ENCODE measurements at regions of chr9 and their contacts with region 1.

Region 1: DNA sequence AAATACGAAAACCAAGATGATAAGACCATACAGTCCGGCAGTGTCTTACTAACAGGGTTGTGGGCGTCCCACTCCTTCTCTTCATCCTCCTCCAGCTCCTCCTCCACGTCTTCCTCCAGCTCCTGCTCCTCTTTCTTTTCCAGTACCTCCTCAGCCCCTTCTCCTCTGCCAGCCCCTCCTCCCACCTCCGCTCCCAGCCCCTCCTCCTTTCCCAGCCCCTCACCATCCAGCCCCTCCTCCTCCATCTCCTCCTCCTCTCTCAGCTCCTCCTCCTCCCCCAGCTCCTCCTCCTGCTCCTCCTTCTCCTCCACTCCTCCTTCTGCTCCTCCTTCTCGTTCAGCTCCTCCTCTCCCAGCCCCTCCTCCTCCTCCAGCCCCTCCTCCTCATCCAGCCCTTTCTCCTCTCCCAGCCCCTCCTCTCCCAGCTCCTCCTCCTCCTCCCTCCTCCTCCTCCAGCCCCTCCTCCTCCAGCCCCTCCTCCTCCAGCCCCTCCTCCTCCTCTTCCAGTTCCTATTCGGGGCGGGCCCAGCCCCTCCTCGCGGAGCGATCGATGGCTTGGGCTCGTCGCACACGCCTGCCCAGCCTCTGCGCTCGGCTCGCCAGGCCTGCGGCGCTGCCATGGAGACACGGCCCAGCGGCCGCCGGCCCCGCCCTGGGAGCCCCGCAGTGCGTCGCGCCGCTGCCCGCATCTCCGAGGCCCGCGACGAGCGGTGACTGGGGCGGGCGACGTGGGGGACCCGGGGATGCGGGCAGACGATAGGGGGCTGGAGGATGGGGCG is at the start of gene BRD3OS:
- DNase-seq: peak; percentile 98 to 99
- ATAC-seq: peak; percentile 96 to 98 (median 96)
- H3K4me3 ChIP-seq: peak within 1 kb of the TSS; percentile 87
- H3K27ac ChIP-seq: peak within 1 kb of the TSS; percentile 51
- H3K4me1 ChIP-seq: peaks cover 8% of the 10 kb centered on the region
- H3K27me3 ChIP-seq: no peaks in the 10 kb centered on the region
- CTCF ChIP-seq: no peak
- total RNA-seq, gene BRD3OS: 2.4 to 4.3 (median 4.2) TPM

Region 2: GRCh38 chr9:134044944-134045343 is 19.9 kb after region 1 on chr9:
- intact Hi-C with region 1: loop called in 1 of 2 experiments (anchors 2 kb)
- DNase-seq: no peak
- ATAC-seq: no peak
- H3K4me3 ChIP-seq: no peak overlapping the region
- H3K27ac ChIP-seq: no peak overlapping the region
- H3K4me1 ChIP-seq: peaks cover 39% of the 10 kb centered on the region
- H3K27me3 ChIP-seq: no peaks in the 10 kb centered on the region
- CTCF ChIP-seq: no peak

Region 3: DNA sequence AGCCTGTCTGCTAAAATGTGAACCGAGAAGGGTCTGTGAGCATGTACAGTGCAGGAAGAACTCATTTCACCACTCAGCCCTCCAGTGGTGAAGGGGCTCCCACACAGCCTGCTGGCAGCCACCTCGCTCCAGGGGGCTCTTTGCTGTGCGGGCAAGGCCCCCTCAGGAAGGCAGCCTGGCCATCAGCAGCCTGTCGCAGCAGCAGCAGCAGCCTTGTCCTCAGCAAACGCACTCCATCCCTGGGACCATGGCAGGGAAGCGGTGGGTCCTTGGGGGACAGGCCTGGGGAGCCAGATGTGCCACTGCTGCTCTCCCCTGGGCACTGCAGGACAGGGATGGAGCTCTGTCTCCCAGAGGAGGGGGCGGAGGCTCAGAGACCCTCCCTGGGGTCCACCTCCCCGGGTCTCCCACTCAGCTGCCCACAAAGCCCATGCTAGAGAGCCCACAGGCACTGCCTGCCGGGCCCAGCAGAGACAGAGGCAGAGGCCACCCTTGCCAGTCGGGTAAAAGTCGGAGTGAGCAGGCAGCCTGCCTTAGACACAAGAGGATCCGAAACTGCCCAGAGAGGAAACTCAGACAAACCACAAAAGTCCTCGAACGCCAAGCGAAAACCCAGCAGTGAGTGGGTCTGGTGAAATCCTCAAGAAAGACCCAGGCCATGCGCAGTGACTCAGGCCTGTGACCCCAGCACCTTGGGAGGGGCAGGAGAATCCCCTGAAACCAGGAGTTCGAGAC is 34.8 kb after region 1 on chr9:
- intact Hi-C with region 1: loop called in 1 of 2 experiments (anchors 5 kb)
- DNase-seq: peak in 1 of 2 donors; percentile 23
- ATAC-seq: no peak
- H3K4me3 ChIP-seq: no peak overlapping the region
- H3K27ac ChIP-seq: no peak overlapping the region
- H3K4me1 ChIP-seq: peaks cover 94% of the 10 kb centered on the region
- H3K27me3 ChIP-seq: no peaks in the 10 kb centered on the region
- CTCF ChIP-seq: no peak

Region 4: DNA sequence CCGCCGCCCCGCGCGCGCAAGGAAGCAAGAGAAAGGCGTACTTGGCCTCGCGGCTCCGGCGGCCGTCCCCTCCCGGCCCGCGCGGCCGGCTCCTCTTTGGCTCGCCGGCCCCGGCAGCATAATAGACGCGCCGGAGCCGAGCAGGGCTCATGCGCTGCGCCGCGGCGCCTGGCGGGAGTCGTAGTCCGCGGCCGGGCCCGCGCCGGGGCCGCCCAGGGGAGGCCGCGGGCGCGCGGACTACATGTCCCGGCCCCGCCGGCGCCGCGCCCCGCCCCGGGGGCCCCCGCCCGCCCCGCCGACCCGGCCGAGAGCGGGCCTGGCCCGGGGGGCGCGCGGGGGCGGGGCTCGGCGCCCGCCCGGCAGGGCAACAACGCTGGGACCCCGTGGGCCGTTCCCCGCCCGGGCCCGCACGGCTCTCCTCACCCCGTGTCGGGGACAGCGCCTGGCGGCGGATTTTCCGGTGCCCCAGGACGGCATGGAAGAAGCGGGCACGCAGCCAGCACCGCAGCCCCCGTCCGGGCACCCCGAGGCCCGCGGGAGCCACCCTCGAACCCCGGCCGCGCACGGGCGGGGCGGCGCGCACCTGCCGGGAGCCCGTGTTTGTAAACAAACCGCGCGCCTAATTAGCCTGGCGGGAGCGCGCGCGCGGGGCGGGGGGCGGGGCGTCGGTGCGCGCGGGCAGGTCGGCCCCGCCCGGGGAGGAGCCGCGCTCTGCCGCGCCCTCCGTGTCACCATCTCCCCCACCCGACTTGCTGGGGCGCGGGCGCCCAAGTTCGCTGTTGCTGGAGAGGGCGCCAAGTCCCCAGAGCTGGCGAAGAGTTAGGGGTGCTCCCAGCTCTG is 43.1 kb after region 1 on chr9 and contains the start of gene BRD3:
- intact Hi-C with region 1: loop called (anchors 2 to 5 kb)
- DNase-seq: peak; percentile 90 to 91
- ATAC-seq: peak; percentile 87 to 91 (median 90)
- H3K4me3 ChIP-seq: peak within 1 kb of the TSS; percentile 89
- H3K27ac ChIP-seq: peak within 1 kb of the TSS; percentile 97
- H3K4me1 ChIP-seq: peaks cover 32% of the 10 kb centered on the region
- H3K27me3 ChIP-seq: no peaks in the 10 kb centered on the region
- CTCF ChIP-seq: no peak
- total RNA-seq, gene BRD3: 21.7 to 28.2 (median 24.8) TPM